HAP-1 (cell line): ENCODE measurements at regions of chr10 and their contacts with region 1.

Region 1: DNA sequence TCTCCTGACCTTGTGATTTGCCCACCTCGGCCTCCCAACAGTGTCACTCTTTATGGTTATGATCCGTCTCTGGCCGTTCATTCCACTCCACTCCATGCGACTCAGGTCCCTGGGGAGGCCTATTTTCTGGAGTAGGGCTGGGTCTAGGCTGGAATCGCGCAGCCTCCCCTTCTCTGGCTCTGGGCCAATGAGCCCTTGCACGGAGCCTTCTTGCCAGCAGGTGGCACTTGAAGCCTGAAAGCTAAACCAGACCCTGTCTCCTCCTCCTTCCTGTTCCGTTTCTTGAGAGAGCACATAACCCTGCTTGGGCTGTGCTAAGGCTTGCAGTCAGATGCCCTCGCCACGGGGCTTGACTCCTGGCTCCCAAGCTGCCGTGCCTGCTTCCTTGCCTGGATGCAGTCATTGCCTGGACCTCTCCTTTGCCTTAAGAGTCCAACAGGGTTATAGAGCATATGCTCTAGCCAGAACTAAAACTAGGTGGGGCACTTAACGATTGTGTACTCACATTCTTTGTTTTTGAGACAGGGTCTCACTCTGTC is 9.6 kb upstream of the DNAJB12 start:
- DNase-seq: peak; percentile 95 to 96
- H3K4me3 ChIP-seq: no peak overlapping the region
- H3K4me1 ChIP-seq: peaks cover 3% of the 10 kb centered on the region
- H3K27me3 ChIP-seq: no peaks in the 10 kb centered on the region

Region 2: DNA sequence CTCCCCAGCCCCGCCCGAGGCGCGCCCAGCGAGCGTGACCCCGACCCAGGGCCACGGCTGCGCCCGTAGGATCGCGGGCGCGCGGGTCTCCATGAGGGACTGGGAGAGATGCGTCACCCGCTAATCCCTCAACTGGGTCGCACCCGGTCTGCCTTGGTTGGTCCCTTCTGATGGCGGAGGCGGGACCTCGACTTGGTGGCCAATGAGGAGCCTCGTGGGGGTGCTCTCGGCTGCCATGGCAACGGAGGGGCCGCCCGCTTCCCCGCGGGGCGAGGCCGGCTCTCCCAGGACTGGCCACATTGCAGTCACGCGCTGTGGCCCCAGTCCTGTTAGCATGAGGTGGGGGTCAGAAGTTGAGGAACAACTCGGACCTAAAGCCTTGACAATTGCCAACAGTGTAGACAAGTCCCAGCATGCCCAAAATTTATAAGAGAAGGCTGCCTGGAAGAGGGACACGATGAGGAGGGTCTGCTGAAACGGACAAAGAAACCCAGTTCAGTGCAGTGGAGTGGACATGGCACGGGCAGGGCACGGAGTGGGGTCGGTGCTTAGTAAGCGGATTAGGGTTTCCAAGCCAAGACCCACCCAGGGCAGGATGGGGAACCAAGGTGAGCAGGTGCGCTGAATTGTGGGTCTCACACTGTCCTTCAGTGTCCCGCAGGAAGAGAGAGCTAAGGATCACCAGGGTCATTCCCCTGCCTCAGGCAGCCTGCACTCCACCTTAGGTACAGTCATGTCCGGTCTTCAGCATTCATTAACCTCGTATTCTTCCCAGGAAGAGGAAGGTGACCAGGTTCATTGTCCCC is 66.1 kb before region 1 on chr10:
- in situ Hi-C with region 1: no loop called
- DNase-seq: peak; percentile 94 to 99
- H3K4me3 ChIP-seq: peak overlapping the region; percentile 42
- H3K4me1 ChIP-seq: peaks cover 18% of the 10 kb centered on the region
- H3K27me3 ChIP-seq: no peaks in the 10 kb centered on the region

Region 3: GRCh38 chr10:72483471-72483870 is 119.2 kb after region 1 on chr10:
- in situ Hi-C with region 1: no loop called
- DNase-seq: no peak
- H3K4me3 ChIP-seq: no peak overlapping the region
- H3K4me1 ChIP-seq: no peaks in the 10 kb centered on the region
- H3K27me3 ChIP-seq: no peaks in the 10 kb centered on the region

Region 4: DNA sequence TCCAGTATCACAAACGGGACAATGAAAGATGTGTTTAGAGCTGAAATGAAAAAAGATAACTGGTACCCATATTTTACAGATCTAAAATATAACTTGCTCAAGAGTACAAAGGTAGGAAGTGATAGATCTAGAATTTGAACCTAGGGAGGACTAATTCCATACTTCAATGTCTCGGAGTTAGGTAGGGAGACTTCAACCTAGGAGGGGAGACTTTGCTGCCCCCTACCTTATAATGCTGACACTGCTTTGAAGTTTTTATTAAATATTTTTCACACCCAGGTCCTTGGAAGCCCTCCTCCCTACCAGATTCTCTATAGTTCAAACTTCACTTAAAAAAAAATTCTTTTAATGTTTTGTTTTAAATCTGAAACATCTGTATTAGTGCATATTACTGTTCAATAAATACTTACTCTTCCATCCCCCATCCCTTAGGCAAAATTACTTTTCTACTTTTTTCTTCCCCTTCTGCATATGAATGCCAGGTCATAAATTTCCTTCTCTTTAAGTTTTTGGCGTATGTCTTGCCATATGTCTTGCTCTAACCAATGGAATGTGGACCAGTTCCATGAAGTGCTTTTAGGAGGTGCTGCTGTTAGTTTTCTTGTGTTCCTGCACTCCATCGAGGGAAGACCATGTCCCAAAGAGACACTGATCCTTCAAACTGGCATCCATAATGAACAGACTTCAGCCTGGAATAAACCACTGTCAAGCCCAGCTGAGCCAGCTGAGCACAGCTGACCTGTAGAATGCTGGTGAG is 203.8 kb after region 1 on chr10:
- in situ Hi-C with region 1: loop called (anchors 10 kb)
- DNase-seq: peak; percentile 34 to 49
- H3K4me3 ChIP-seq: no peak overlapping the region
- H3K4me1 ChIP-seq: peaks cover 6% of the 10 kb centered on the region; the same call in 1 of the 2 replicates
- H3K27me3 ChIP-seq: no peaks in the 10 kb centered on the region

Region 5: GRCh38 chr10:72692057-72692910 is 328.0 kb after region 1 on chr10 and contains the start of gene MCU:
- in situ Hi-C with region 1: loop called (anchors 10 kb)
- DNase-seq: peak in 1 of 2 experiments; percentile 96
- H3K4me3 ChIP-seq: peak within 1 kb of the TSS; percentile 68
- H3K4me1 ChIP-seq: peaks cover 41% of the 10 kb centered on the region
- H3K27me3 ChIP-seq: no peaks in the 10 kb centered on the region

Region 6: GRCh38 chr10:72834183-72834825 is 470.0 kb after region 1 on chr10:
- in situ Hi-C with region 1: loop called (anchors 5 kb)
- DNase-seq: peak; percentile 42 to 61
- H3K4me3 ChIP-seq: no peak overlapping the region
- H3K4me1 ChIP-seq: no peaks in the 10 kb centered on the region
- H3K27me3 ChIP-seq: no peaks in the 10 kb centered on the region

Region 7: DNA sequence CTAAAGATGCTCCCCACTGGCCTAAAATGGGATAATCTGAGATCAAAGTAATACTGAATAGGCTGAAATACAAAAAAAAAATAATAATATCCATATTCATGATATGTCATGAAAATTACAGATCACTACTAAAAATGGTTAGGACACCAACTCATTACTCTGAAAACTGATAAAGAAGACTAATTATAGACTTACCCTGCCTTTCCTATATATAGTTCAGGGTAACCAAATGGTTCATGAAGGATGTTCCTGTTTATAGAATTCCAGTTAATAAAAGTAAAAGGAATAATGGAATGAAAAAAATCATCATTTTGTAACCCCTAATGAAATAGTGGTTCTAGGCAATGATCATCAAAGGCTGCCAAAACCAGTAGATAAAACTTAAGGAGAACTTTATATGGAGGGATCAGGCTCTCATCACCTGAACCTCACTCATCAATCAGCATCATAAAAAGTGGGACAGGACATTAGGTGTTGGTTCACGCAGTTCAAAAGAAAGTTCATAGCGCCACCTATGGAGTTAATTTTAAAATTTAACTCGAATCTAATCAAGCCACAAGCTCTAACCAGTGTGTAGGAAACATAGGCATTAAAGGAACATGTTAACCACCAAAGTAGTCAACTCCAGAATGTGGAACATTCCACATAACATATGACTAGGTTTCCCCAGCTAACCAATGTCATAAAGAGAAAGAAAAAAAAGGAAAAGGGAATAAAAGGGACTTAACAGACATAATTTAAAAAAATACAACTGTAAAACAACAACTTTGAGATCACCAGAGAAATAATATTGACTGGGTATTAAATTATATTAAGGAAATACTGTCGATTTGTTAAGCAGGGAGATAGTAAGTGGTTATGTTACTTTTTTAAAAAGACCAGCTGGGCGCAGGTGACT is 696.7 kb after region 1 on chr10:
- in situ Hi-C with region 1: loop called (anchors 10 kb)
- DNase-seq: peak in 1 of 2 experiments; percentile 59
- H3K4me3 ChIP-seq: no peak overlapping the region
- H3K4me1 ChIP-seq: no peaks in the 10 kb centered on the region
- H3K27me3 ChIP-seq: no peaks in the 10 kb centered on the region